ENCODE measurements at regions of chr16 and their contacts with region 1.

Region 1: DNA sequence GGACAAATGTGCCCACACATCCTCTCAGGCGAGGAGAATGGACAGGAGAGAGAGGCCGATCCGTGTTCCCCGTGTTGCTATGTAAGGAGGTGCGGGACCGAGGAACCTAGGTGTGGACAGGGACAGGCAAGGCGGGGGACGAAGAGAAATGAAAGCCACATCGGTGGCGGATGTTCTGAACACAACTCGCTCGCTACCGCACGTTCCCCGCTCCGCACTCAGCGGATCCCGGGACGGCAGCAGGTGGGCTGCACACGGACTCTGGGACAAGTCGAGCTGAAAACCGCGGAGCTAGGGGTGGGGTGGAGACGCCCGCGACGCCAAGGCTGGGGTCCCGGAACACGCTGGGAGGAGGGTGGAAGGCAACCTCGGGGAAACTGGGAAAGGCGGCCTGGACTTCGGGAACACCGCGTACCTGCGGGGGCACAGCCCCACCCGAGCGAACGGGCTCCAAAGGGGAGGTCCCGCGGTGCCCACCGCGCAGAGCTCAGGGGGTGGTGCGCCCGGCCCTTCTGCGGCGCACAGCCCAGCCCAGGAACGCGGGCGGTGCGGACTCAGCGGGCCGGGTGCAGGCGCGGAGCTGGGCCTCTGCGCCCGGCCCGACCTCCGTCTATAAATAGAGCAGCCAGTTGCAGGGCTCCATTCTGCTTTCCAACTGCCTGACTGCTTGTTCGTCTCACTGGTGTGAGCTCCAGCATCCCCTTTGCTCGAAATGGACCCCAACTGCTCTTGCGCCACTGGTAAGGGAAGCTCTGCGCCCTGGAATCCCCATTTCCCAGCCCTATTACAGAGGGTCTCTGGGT is at the start of gene MT1E:
- DNase-seq: no peak
- H3K4me3 ChIP-seq: peak within 1 kb of the TSS; percentile 84
- CTCF ChIP-seq: no peak

Region 2: DNA sequence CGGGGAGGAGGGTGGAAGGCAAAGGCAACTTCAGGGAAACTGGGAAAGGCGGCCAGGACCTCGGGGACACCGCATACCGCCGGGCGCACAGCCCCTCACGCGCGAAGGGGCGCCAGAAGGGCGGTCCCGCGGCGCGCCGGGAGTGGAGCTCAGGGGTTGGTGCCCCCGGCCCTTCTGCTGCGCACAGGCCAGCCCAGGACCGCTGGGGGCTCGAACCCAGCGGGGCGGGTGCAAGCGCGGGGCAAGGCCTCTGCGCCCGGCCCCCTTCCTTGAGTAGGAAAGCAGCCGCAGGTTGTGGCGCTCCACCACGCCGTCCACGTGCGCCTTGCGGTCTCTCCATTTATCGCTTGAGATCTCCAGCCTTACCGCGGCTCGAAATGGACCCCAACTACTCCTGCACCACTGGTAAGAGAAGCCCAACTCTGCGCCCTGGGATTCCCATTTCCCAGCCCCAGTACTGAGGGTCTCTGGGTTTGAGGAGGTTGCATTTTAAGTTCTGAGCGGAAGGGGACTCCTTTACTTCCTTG is 10.2 kb after region 1 on chr16:
- CTCF ChIA-PET with region 1: interaction called, 4 read pairs
- POLR2A ChIA-PET with region 1: interaction called, 12 read pairs
- DNase-seq: no peak
- H3K4me3 ChIP-seq: peak overlapping the region; percentile 27
- CTCF ChIP-seq: no peak

Region 3: DNA sequence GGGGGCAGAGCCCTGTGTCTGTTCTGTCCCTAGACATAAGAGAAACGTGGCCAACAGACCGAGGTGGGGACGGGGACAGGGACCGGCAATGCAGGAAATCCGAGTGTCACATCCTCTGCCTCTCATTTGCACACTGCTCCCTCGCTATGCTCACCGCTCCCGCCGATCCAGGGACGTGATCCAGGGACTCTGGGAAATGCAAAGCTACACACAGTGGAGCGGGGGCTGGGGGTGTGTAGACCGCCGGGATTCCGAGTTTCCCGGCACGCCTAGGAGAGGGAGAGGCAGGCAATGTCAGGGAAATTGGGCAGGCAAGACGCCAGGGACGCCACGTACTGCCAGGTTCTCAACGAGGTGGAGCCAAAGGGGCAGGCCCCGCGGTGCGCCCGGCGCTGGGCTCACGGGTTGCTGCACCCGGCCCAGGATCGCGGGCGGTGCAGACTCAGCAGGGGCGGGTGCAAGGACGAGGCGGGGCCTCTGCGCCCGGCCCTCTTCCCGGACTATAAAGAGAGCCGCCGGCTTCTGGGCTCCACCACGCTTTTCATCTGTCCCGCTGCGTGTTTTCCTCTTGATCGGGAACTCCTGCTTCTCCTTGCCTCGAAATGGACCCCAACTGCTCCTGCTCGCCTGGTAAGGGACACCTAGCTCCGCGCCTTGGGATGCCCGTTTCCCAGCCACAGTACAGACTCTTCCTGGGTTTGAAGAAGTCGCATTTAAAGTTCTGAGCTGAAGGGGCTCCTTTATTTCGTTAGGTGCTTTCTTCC is 56.8 kb after region 1 on chr16 and contains the start of gene MT1X:
- CTCF ChIA-PET with region 1: interaction called, 3 read pairs
- POLR2A ChIA-PET with region 1: interaction called, 25 read pairs
- DNase-seq: peak; percentile 10
- H3K4me3 ChIP-seq: peak within 1 kb of the TSS; percentile 73
- CTCF ChIP-seq: no peak

Region 4: GRCh38 chr16:56749672-56750491 is 124.5 kb after region 1 on chr16:
- CTCF ChIA-PET with region 1: no interaction called
- POLR2A ChIA-PET with region 1: no interaction called
- DNase-seq: no peak
- H3K4me3 ChIP-seq: no peak overlapping the region
- CTCF ChIP-seq: no peak

Measured in AG04449 (cell line).